SK-N-SH (cell line): ENCODE measurements at regions of chr11 and their contacts with region 1.

Region 1: DNA sequence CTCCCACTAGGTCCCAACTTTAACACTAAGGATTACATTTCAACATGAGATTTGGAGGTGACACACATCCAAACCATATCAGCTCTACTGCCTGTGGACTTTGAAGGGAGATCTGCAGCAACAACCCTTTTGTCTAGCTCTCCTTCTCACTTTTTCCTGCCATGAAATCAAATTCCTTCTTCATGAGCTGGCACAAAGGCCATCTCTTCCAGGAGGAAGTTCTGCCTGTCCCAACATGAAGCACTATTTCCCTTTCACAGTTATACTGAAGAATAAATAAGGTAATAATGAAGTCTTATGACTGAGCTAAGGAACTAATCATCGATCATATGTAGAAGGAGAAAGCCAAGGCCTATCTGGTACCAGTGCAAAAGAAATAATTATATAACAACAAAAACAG is 253.5 kb upstream of the TENM4 start:
- DNase-seq: no peak
- H3K4me3 ChIP-seq: no peak overlapping the region
- H3K27ac ChIP-seq: no peak overlapping the region
- H3K4me1 ChIP-seq: no peaks in the 10 kb centered on the region
- H3K27me3 ChIP-seq: no peaks in the 10 kb centered on the region
- CTCF ChIP-seq: no peak
- EP300 ChIP-seq: no peak
- RAD21 ChIP-seq: no peak

Region 2: DNA sequence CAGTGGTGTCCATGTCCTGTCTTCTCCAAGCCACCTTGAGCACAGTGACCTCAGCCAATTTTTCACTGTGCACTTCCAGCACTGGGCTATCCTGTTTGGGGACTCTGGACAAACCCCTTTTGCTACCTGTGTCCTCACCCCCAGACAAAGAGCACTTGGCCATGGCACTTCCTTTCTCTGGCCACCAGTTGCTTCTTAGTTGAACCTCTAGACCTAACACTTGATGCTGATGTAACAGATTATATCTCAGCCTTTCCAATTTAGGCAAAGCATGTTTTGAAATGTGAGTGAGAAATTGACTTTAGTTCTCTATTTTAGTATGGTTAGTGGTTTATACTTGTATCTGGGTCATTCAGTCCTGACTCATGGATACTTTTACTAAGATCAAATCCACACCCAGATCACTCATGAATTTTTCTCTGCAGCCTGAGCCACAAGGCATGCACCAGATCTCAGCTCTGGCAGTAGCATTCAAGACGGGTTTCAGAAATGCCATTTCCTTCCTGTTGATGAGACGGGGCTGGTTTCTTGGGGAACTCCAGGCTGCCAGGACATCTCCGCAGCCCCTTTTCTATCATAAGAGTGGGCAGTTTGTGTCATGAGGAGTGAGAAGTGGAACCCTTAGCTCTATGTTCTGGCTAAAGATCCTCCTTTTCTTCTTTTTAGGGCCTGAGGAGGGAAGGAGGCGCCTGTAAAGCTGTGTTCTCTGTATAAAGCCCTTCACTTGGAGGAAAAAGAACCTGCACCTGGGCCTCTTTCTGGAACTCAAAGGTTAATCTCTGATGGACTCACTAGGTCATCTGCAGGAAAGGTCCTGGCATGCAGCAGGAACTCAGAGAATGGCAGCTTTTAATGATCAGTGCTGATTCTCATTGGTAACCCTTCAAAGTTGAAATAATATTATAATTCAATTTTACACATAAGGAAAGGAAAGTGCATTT is 68.0 kb before region 1 on chr11:
- CTCF ChIA-PET with region 1: no interaction called
- POLR2A ChIA-PET with region 1: no interaction called
- DNase-seq: no peak
- H3K4me3 ChIP-seq: no peak overlapping the region
- H3K27ac ChIP-seq: no peak overlapping the region
- H3K4me1 ChIP-seq: peaks cover 0 to 2% of the 10 kb centered on the region in 2 experiments; a peak in 1 of 4 replicates
- H3K27me3 ChIP-seq: no peaks in the 10 kb centered on the region; the same call in 1 of the 2 replicates
- CTCF ChIP-seq: no peak
- EP300 ChIP-seq: no peak
- RAD21 ChIP-seq: no peak

Region 3: DNA sequence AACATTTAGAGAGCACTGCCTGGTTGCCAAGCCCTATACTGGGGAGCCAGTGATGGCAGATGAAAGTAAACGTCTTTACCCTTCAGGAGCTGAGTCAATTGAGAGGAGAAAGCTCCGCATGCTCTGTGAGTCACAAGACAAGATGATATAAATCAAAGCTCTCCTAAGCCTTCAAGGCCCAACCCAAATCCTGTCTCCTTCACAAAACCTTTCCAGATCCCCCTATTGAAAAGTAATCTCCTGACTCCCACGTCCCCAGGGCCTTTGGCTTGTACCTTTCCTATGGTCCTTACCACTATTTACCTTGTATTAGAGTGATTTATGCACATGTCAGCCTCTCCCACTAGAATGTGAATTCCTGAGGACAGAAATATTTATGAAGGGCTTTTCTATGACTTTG is 23.5 kb before region 1 on chr11:
- CTCF ChIA-PET with region 1: no interaction called
- POLR2A ChIA-PET with region 1: no interaction called
- DNase-seq: no peak
- H3K4me3 ChIP-seq: no peak overlapping the region
- H3K27ac ChIP-seq: no peak overlapping the region
- H3K4me1 ChIP-seq: peaks cover 0 to 15% of the 10 kb centered on the region in 2 experiments; a peak in 1 of 4 replicates
- H3K27me3 ChIP-seq: no peaks in the 10 kb centered on the region
- CTCF ChIP-seq: no peak
- EP300 ChIP-seq: no peak
- RAD21 ChIP-seq: no peak

Region 4: GRCh38 chr11:79708300-79708932 is 14.0 kb after region 1 on chr11:
- CTCF ChIA-PET with region 1: interaction called, 12 read pairs
- POLR2A ChIA-PET with region 1: no interaction called
- DNase-seq: peak; percentile 29
- H3K4me3 ChIP-seq: no peak overlapping the region; a peak in 1 of 4 replicates
- H3K27ac ChIP-seq: no peak overlapping the region
- H3K4me1 ChIP-seq: no peaks in the 10 kb centered on the region
- H3K27me3 ChIP-seq: no peaks in the 10 kb centered on the region
- CTCF ChIP-seq: peak; percentile 55
- EP300 ChIP-seq: no peak
- RAD21 ChIP-seq: peak; percentile 76